Activated CD4-positive, alpha-beta T cell treated with anti-CD3 and anti-CD28 coated beads for 36 hours (primary cell): ENCODE measurements at regions of chr14 and their contacts with region 1.

Region 1: GRCh38 chr14:20454516-20455354 is at the starts of genes APEX1 and OSGEP:
- DNase-seq: peak; percentile 99
- ATAC-seq: peak; percentile 89
- H3K4me3 Mint-ChIP-seq: no peak within 1 kb of the TSS
- H3K27ac Mint-ChIP-seq: no peak within 1 kb of the TSS
- H3K4me1 Mint-ChIP-seq: peaks cover 18% of the 10 kb centered on the region
- H3K27me3 Mint-ChIP-seq: no peaks in the 10 kb centered on the region
- total RNA-seq, gene APEX1: 216 to 257 TPM
- total RNA-seq, gene OSGEP: 46.2 to 47.5 TPM

Region 2: GRCh38 chr14:20327005-20327869 is 127.5 kb before region 1 on chr14:
- CTCF ChIA-PET with region 1: interaction called, 3 read pairs
- POLR2A ChIA-PET with region 1: interaction called, 3 read pairs
- intact Hi-C with region 1: loop called in 1 of 2 experiments (anchors 1 kb)
- DNase-seq: no peak
- ATAC-seq: peak; percentile 71
- H3K4me3 Mint-ChIP-seq: no peak overlapping the region
- H3K27ac Mint-ChIP-seq: peak overlapping the region; percentile 44
- H3K4me1 Mint-ChIP-seq: peaks cover 37% of the 10 kb centered on the region
- H3K27me3 Mint-ChIP-seq: no peaks in the 10 kb centered on the region

Region 3: GRCh38 chr14:20332788-20333493 is 121.8 kb before region 1 on chr14 and contains the start of gene CCNB1IP1:
- CTCF ChIA-PET with region 1: no interaction called
- POLR2A ChIA-PET with region 1: interaction called, 3 read pairs
- intact Hi-C with region 1: loop called (anchors 1 to 2 kb)
- DNase-seq: peak; percentile 59
- ATAC-seq: peak; percentile 99
- H3K4me3 Mint-ChIP-seq: peak within 1 kb of the TSS; percentile 98
- H3K27ac Mint-ChIP-seq: peak within 1 kb of the TSS; percentile 95
- H3K4me1 Mint-ChIP-seq: peaks cover 35% of the 10 kb centered on the region
- H3K27me3 Mint-ChIP-seq: no peaks in the 10 kb centered on the region
- total RNA-seq, gene CCNB1IP1: 57.4 to 67.0 TPM

Region 4: GRCh38 chr14:20365928-20366327 is 88.8 kb before region 1 on chr14:
- CTCF ChIA-PET with region 1: no interaction called
- POLR2A ChIA-PET with region 1: no interaction called
- intact Hi-C with region 1: loop called in 1 of 2 experiments (anchors 1 kb)
- DNase-seq: no peak
- ATAC-seq: no peak
- H3K4me3 Mint-ChIP-seq: no peak overlapping the region
- H3K27ac Mint-ChIP-seq: peak overlapping the region; percentile 68
- H3K4me1 Mint-ChIP-seq: peaks cover 24% of the 10 kb centered on the region
- H3K27me3 Mint-ChIP-seq: no peaks in the 10 kb centered on the region

Region 5: GRCh38 chr14:20387576-20387975 is 67.2 kb before region 1 on chr14:
- CTCF ChIA-PET with region 1: no interaction called
- POLR2A ChIA-PET with region 1: no interaction called
- intact Hi-C with region 1: no loop called
- DNase-seq: no peak
- ATAC-seq: no peak
- H3K4me3 Mint-ChIP-seq: no peak overlapping the region
- H3K27ac Mint-ChIP-seq: no peak overlapping the region
- H3K4me1 Mint-ChIP-seq: no peaks in the 10 kb centered on the region
- H3K27me3 Mint-ChIP-seq: no peaks in the 10 kb centered on the region

Region 6: GRCh38 chr14:20400965-20401593 is 53.7 kb before region 1 on chr14:
- CTCF ChIA-PET with region 1: no interaction called
- POLR2A ChIA-PET with region 1: interaction called, 9 read pairs
- intact Hi-C with region 1: loop called (anchors 1 to 2 kb)
- DNase-seq: peak; percentile 37
- ATAC-seq: peak; percentile 95
- H3K4me3 Mint-ChIP-seq: peak overlapping the region; percentile 29
- H3K27ac Mint-ChIP-seq: peak overlapping the region; percentile 88
- H3K4me1 Mint-ChIP-seq: peaks cover 34% of the 10 kb centered on the region
- H3K27me3 Mint-ChIP-seq: no peaks in the 10 kb centered on the region

Region 7: DNA sequence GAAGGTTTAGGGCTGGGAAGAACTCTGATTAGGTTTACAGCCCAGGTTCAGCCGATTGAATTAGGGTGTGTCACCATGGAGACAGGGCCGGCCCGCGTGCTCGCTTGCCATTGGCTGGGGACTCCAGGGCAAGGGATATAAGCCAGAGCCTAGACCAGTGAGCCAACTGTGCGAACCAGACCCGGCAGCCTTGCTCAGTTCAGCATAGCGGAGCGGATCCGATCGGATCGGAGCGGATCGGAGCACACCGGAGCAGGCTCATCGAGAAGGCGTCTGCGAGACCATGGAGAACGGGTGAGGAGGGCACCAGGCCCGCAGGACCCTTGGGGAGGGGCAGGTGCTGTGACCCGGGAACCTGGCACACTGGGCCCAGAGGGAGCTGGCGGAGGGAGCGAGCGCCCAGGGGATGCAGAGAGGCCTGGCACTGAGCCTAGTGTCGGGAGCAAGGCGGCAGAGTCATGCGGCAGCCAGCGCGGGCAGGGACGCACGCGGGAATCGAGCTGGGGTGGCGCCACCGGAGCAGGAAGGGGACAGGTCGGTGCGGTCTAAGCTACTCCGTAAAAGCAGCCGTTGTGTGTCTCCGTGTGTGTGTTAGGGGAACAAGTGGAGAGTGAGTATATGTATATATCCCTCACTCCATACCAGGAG is 14.6 kb after region 1 on chr14 and contains the start of gene PNP:
- CTCF ChIA-PET with region 1: interaction called, 5 read pairs
- POLR2A ChIA-PET with region 1: interaction called, 35 read pairs
- intact Hi-C with region 1: loop called (anchors 1 to 2 kb)
- DNase-seq: peak; percentile 93
- ATAC-seq: peak; percentile 93
- H3K4me3 Mint-ChIP-seq: peak within 1 kb of the TSS; percentile 91
- H3K27ac Mint-ChIP-seq: peak within 1 kb of the TSS; percentile 97
- H3K4me1 Mint-ChIP-seq: peaks cover 37% of the 10 kb centered on the region
- H3K27me3 Mint-ChIP-seq: no peaks in the 10 kb centered on the region
- total RNA-seq, gene PNP: 160 to 164 TPM

Region 8: GRCh38 chr14:20503898-20504297 is 49.2 kb after region 1 on chr14:
- CTCF ChIA-PET with region 1: no interaction called
- POLR2A ChIA-PET with region 1: no interaction called
- intact Hi-C with region 1: no loop called
- DNase-seq: no peak
- ATAC-seq: no peak
- H3K4me3 Mint-ChIP-seq: no peak overlapping the region
- H3K27ac Mint-ChIP-seq: no peak overlapping the region
- H3K4me1 Mint-ChIP-seq: peaks cover 10% of the 10 kb centered on the region
- H3K27me3 Mint-ChIP-seq: no peaks in the 10 kb centered on the region

Region 9: GRCh38 chr14:20989572-20990551 is 535.1 kb after region 1 on chr14 and contains the start of gene METTL17:
- CTCF ChIA-PET with region 1: no interaction called
- POLR2A ChIA-PET with region 1: no interaction called
- intact Hi-C with region 1: loop called in 1 of 2 experiments (anchors 2 kb)
- DNase-seq: peak; percentile 93
- ATAC-seq: peak; percentile 97
- H3K4me3 Mint-ChIP-seq: peak within 1 kb of the TSS; percentile 92
- H3K27ac Mint-ChIP-seq: peak within 1 kb of the TSS; percentile 89
- H3K4me1 Mint-ChIP-seq: peaks cover 37% of the 10 kb centered on the region
- H3K27me3 Mint-ChIP-seq: no peaks in the 10 kb centered on the region
- total RNA-seq, gene METTL17: 89.3 to 90.0 TPM